ENCODE measurements at regions of chr6 and their contacts with region 1.

Region 1: DNA sequence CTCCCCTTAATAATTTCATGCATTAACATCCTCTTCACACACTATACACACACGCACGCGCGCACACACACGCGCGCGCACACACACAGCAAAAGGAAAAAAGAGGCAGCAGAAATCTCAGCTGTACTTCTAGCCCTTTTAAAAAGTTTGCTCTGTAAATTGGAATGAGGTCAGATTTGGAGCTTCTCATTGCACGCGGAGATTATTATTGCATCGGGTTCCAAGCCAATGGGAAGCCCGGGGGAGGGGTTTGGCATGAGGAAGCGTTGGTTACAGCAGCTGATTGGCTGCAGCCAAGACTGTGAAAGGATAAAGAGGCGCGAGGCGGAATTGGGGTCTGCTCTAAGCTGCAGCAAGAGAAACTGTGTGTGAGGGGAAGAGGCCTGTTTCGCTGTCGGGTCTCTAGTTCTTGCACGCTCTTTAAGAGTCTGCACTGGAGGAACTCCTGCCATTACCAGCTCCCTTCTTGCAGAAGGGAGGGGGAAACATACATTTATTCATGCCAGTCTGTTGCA is at the start of gene SOX4:
- DNase-seq: peak in 8 of 9 experiments; percentile 40 to 90 (median 72)
- ATAC-seq: peak; percentile 71
- H3K4me3 ChIP-seq: peak within 1 kb of the TSS; percentile 62 to 66
- H3K4me3 Mint-ChIP-seq: no peak within 1 kb of the TSS
- H3K27ac ChIP-seq: peak within 1 kb of the TSS; percentile 19 to 33
- H3K27ac Mint-ChIP-seq: peak within 1 kb of the TSS; percentile 78
- H3K4me1 ChIP-seq: peaks cover 28% of the 10 kb centered on the region
- H3K4me1 Mint-ChIP-seq: peaks cover 25% of the 10 kb centered on the region
- H3K27me3 ChIP-seq: peaks cover under 1 to 23% of the 10 kb centered on the region in 2 experiments
- H3K27me3 Mint-ChIP-seq: peaks cover 15% of the 10 kb centered on the region
- CTCF ChIP-seq: no peak
- total RNA-seq, gene SOX4: 20.2 to 20.4 TPM

Region 2: DNA sequence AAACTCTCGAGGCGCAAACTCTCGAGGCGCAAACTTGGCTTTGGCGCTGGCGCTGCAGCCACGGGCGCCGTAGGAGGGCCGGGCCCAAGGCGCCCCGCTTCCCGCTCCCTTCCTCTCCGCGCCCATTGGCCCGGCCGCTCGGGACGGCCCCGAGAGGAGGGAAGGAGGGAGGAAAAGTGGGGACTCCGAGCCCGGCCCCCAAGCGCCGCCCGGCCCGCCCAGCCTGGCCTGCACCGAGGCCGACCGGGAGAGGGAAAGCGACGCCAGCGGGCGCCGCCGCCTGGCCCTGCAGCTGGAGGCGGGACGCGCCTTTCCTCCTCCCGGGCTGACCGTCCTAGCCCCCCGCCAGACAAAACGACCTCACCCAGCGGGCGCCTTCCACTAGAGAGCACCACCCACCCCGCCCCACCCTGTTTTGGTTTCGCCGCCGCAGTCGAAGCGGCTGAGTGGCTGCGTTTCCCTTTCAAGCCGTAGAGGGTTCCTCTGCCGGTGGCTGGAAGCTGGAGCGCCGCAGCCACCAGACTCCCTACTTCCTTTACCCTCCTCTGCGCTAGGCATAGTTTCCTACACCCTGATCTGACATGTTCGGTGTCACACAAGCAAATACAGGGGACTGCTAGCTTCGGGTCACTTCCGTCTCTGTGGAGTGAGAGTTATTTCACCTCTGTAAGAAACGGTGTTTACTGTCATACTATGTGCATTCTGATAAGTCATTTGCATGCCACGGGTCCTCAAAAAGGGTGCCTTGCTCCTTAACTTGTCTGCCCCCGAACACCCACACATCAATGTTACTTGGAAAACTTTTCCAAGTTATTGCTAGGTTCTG is 1380.9 kb before region 1 on chr6 and contains the start of gene MBOAT1:
- CTCF ChIA-PET with region 1: no interaction called
- POLR2A ChIA-PET with region 1: no interaction called
- intact Hi-C with region 1: loop called in 1 of 2 experiments (anchors 10 kb)
- DNase-seq: peak; percentile 22 to 81 (median 51)
- ATAC-seq: peak; percentile 63
- H3K4me3 ChIP-seq: peak within 1 kb of the TSS; percentile 57 to 62
- H3K4me3 Mint-ChIP-seq: peak within 1 kb of the TSS; percentile 95
- H3K27ac ChIP-seq: peak within 1 kb of the TSS; percentile 19 to 59
- H3K27ac Mint-ChIP-seq: peak within 1 kb of the TSS; percentile 90
- H3K4me1 ChIP-seq: peaks cover 20% of the 10 kb centered on the region
- H3K4me1 Mint-ChIP-seq: peaks cover 30% of the 10 kb centered on the region
- H3K27me3 ChIP-seq: no peaks in the 10 kb centered on the region
- H3K27me3 Mint-ChIP-seq: no peaks in the 10 kb centered on the region
- CTCF ChIP-seq: no peak
- total RNA-seq, gene MBOAT1: 5.9 to 6.5 TPM

Region 3: DNA sequence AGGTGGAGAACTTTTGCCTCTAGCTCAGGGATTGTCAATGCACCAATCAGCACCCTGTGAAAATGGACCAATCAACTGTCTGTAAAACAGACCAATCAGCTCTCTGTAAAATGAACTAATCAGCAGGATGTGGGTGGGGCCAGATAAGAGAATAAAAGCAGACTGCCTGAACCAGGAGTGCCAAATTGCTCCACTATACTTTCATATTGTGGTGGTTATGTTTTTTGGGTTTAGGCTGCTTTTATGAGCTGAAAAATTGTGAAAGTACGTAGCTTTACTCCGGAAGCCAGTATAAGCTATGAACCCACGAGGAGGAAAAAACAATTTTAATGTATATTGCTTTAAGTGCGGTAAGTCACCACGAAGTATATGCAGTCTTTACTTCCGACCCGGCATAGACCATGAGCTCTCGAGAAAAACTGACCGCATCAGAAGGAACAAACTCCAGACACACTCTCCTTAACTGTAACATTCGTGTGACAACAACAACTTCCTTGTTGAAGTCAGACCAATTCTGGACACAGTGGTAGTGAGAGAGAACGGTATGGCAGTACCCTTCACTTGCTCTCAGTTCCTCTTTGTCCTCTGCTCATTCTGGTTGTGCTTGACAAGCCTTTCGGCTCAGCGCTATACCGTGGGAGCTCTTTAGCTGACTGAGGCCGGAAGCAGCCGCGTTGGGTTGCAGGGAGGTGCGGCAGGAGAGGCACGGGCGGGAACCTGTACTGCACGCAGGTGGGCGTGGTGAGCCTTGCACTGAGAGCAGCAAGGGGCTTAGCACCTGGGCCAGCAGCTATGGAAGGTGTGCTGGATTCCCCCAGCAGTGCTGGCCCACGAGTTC is 1273.7 kb before region 1 on chr6:
- CTCF ChIA-PET with region 1: no interaction called
- POLR2A ChIA-PET with region 1: no interaction called
- intact Hi-C with region 1: loop called in 1 of 2 experiments (anchors 5 kb)
- DNase-seq: peak; percentile 57 to 92 (median 76)
- ATAC-seq: peak; percentile 91
- H3K4me3 ChIP-seq: peak overlapping the region; percentile 46 to 61
- H3K4me3 Mint-ChIP-seq: peak overlapping the region; percentile 93
- H3K27ac ChIP-seq: peak overlapping the region; percentile 78 to 87
- H3K27ac Mint-ChIP-seq: peak overlapping the region; percentile 99
- H3K4me1 ChIP-seq: peaks cover 12% of the 10 kb centered on the region
- H3K4me1 Mint-ChIP-seq: peaks cover 21% of the 10 kb centered on the region
- H3K27me3 ChIP-seq: no peaks in the 10 kb centered on the region
- H3K27me3 Mint-ChIP-seq: no peaks in the 10 kb centered on the region
- CTCF ChIP-seq: no peak

Region 4: DNA sequence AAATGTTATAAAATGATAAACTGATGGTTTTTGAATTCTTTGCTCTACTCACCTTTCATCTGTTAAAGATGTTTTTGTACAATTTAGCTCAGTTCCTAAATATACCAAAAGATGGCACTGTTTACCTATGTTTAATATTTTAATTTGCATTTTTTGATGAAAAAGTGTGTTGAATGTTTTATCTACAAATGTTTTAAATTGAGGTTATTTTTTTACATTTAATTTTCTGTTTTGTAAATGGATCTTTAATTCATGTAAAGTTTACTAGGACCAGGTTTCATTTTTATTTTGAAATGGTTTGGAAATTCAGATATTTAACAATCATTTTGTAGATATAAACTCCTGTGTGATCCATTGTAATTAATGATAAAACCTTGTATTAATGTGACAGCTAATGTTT is 1029.2 kb before region 1 on chr6:
- CTCF ChIA-PET with region 1: interaction called, 92 read pairs
- POLR2A ChIA-PET with region 1: interaction called, 6 read pairs
- intact Hi-C with region 1: loop called (anchors 1 kb)
- DNase-seq: peak in 2 of 9 experiments; percentile 30 to 44
- ATAC-seq: no peak
- H3K4me3 ChIP-seq: no peak overlapping the region
- H3K4me3 Mint-ChIP-seq: no peak overlapping the region
- H3K27ac ChIP-seq: no peak overlapping the region
- H3K27ac Mint-ChIP-seq: no peak overlapping the region
- H3K4me1 ChIP-seq: peaks cover 4% of the 10 kb centered on the region
- H3K4me1 Mint-ChIP-seq: peaks cover 16% of the 10 kb centered on the region
- H3K27me3 ChIP-seq: no peaks in the 10 kb centered on the region
- H3K27me3 Mint-ChIP-seq: no peaks in the 10 kb centered on the region
- CTCF ChIP-seq: peak; percentile 87

Region 5: GRCh38 chr6:21527731-21528130 is 65.7 kb before region 1 on chr6:
- CTCF ChIA-PET with region 1: interaction called, 11 read pairs
- POLR2A ChIA-PET with region 1: no interaction called
- intact Hi-C with region 1: loop called in 1 of 2 experiments (anchors 1 kb)
- DNase-seq: peak in 1 of 9 experiments; percentile 7
- ATAC-seq: no peak
- H3K4me3 ChIP-seq: no peak overlapping the region
- H3K4me3 Mint-ChIP-seq: no peak overlapping the region
- H3K27ac ChIP-seq: no peak overlapping the region
- H3K27ac Mint-ChIP-seq: no peak overlapping the region
- H3K4me1 ChIP-seq: no peaks in the 10 kb centered on the region
- H3K4me1 Mint-ChIP-seq: no peaks in the 10 kb centered on the region
- H3K27me3 ChIP-seq: no peaks in the 10 kb centered on the region
- H3K27me3 Mint-ChIP-seq: peaks cover 3% of the 10 kb centered on the region
- CTCF ChIP-seq: peak; percentile 23

Measured in CD8-positive, alpha-beta T cell (primary cell).